Activated naive CD4-positive, alpha-beta T cell treated with anti-CD3 and anti-CD28 coated beads, Interleukin-2, amount 10 ng/mL, durations not matched to agents 7 days and 5 days (primary cell): ENCODE measurements at regions of chr3 and their contacts with region 1.

Region 1: DNA sequence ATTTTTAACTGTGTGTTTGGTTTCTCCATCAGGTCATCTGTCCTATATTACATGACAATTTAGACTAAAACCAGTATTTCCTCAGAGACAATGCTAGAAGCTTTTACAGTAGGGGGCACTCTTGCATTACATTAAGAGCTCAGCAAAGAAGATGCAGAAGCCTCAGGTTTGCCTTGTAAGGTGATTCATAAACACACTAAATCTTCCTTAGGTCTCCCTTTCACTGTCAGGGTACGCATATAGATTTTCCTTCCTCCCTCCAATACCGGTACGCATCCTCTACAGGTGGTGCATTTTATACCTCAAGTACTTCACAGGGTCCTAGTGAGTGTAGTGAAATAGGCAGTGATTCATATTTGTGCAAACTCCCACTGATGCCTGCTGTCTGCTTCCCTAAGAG is 46.5 kb downstream of the CD86 start:
- DNase-seq: no peak
- H3K4me3 Mint-ChIP-seq: no peak overlapping the region
- H3K27ac Mint-ChIP-seq: no peak overlapping the region
- H3K4me1 Mint-ChIP-seq: peaks cover 20% of the 10 kb centered on the region
- H3K27me3 Mint-ChIP-seq: no peaks in the 10 kb centered on the region

Region 2: GRCh38 chr3:121545574-121546455 is 555.8 kb before region 1 on chr3 and contains the start of gene POLQ:
- CTCF ChIA-PET with region 1: interaction called, 18 read pairs
- DNase-seq: peak; percentile 92
- H3K4me3 Mint-ChIP-seq: peak within 1 kb of the TSS; percentile 99
- H3K27ac Mint-ChIP-seq: peak within 1 kb of the TSS; percentile 96
- H3K4me1 Mint-ChIP-seq: peaks cover 39% of the 10 kb centered on the region
- H3K27me3 Mint-ChIP-seq: no peaks in the 10 kb centered on the region

Region 3: GRCh38 chr3:121883507-121883906 is 218.1 kb before region 1 on chr3:
- CTCF ChIA-PET with region 1: interaction called, 10 read pairs
- DNase-seq: no peak
- H3K4me3 Mint-ChIP-seq: no peak overlapping the region
- H3K27ac Mint-ChIP-seq: no peak overlapping the region
- H3K4me1 Mint-ChIP-seq: no peaks in the 10 kb centered on the region
- H3K27me3 Mint-ChIP-seq: no peaks in the 10 kb centered on the region

Region 4: DNA sequence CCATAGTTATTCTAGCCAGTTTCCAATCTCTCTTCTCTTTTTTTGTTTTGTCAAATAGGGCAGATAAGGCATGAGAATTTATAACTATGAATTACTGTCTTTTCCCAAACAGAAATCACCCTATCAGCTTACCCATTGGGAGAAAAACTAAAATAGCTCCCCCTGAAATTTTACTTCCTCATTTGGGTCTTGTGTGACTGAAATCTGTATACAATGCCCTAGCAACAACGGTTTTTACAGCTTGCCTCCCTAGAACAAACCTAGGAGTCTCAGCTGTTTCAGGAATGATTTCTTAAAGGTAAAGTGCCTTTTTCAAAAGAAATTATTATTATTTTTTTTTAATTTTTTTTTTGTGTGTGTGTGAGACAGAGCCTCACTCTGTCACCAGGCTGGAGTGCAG is 10.3 kb after region 1 on chr3:
- CTCF ChIA-PET with region 1: interaction called, 15 read pairs
- DNase-seq: no peak
- H3K4me3 Mint-ChIP-seq: no peak overlapping the region
- H3K27ac Mint-ChIP-seq: no peak overlapping the region
- H3K4me1 Mint-ChIP-seq: no peaks in the 10 kb centered on the region
- H3K27me3 Mint-ChIP-seq: peaks cover 18% of the 10 kb centered on the region

Region 5: DNA sequence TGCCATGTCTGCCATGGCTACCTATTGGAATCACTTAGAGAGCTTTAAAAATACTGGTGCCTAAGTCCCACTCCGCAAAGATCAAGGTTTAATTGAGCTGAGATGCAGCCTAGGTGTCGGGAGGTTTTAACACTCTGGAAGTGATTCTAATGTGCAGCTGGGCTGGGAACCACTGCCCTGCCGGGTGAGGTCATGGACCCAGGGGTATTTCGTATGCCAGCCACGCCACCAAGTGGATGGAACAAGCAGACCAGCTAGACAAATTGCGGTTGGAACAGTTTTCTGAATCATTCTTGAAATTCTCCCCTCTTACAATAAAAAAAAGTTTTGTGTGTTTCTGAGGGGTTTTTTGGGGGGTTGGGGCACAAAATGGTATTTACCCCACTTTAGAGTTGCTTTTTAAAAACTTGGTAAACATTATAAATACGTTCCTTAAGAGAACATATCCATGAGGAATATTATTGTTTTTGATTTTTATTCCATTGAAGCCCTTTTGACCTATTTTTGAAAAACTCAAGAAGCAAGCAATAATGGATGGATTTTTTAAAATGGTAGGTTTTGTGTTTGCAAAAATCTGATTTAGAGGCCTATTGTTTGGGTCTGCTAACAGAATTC is 157.2 kb after region 1 on chr3:
- CTCF ChIA-PET with region 1: interaction called, 111 read pairs
- DNase-seq: peak; percentile 61
- H3K4me3 Mint-ChIP-seq: no peak overlapping the region
- H3K27ac Mint-ChIP-seq: no peak overlapping the region
- H3K4me1 Mint-ChIP-seq: peaks cover 7% of the 10 kb centered on the region
- H3K27me3 Mint-ChIP-seq: peaks cover 24% of the 10 kb centered on the region

Region 6: DNA sequence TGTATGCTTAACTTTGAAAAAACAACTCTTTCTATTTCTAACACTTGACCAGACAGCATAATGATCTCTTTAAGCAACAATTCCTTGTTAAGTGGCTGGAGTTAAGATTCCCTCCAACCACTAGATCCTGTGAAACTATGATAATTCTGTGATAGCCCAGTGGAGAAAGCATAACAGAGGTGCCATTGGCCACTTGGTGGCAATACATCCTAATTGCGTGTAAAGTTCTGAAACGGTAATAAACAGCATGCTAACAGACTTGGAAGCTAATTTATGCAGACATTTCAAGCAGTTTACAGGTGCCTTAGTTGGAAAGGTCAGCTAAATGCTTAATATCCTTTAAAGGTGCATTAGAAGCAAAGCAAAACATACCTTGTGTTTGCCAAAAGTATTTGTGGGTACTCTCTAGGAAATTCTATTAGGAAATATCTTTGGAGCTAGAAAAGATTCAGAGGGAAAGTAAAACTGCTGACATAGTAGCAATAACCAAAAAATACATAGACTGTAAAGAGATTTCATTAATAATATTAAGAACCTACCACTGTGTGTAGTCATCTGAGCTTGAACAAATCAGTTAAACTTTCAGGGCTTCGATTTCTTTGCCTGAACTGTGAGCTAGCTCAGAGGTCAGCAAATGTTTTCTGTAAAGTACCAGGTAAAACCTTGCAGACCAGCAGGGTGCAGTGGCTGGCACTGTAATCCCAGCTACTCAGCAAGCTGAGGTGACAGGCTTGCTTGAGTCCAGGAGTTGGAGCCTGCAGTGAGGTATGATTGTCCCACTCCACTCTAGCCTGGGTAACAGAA is 204.4 kb after region 1 on chr3:
- CTCF ChIA-PET with region 1: interaction called, 15 read pairs
- DNase-seq: no peak
- H3K4me3 Mint-ChIP-seq: no peak overlapping the region
- H3K27ac Mint-ChIP-seq: no peak overlapping the region
- H3K4me1 Mint-ChIP-seq: peaks cover 2% of the 10 kb centered on the region
- H3K27me3 Mint-ChIP-seq: peaks cover 24% of the 10 kb centered on the region

Region 7: GRCh38 chr3:122356415-122356814 is 254.8 kb after region 1 on chr3:
- CTCF ChIA-PET with region 1: interaction called, 10 read pairs
- DNase-seq: peak; percentile 58
- H3K4me3 Mint-ChIP-seq: no peak overlapping the region
- H3K27ac Mint-ChIP-seq: no peak overlapping the region
- H3K4me1 Mint-ChIP-seq: peaks cover 9% of the 10 kb centered on the region
- H3K27me3 Mint-ChIP-seq: no peaks in the 10 kb centered on the region